Naive thymus-derived CD8-positive, alpha-beta T cell (primary cell): ENCODE measurements at regions of chr11 and their contacts with region 1.

Region 1: GRCh38 chr11:560305-561147 is at the starts of genes LMNTD2 and RASSF7:
- DNase-seq: peak; percentile 91 to 97 (median 95)
- ATAC-seq: peak; percentile 89 to 92
- H3K4me3 Mint-ChIP-seq: peak within 1 kb of the TSS; percentile 82 to 91 (median 86)
- H3K27ac Mint-ChIP-seq: peak within 1 kb of the TSS; percentile 63 to 94 (median 84)
- H3K4me1 Mint-ChIP-seq: peaks cover 7 to 22% (median 17%) of the 10 kb centered on the region in 4 donors
- H3K27me3 Mint-ChIP-seq: no peaks in the 10 kb centered on the region
- polyA plus RNA-seq, gene LMNTD2: 0.96 to 1.9 (median 0.99) TPM
- polyA plus RNA-seq, gene RASSF7: 22.5 to 32.3 (median 24.2) TPM

Region 2: DNA sequence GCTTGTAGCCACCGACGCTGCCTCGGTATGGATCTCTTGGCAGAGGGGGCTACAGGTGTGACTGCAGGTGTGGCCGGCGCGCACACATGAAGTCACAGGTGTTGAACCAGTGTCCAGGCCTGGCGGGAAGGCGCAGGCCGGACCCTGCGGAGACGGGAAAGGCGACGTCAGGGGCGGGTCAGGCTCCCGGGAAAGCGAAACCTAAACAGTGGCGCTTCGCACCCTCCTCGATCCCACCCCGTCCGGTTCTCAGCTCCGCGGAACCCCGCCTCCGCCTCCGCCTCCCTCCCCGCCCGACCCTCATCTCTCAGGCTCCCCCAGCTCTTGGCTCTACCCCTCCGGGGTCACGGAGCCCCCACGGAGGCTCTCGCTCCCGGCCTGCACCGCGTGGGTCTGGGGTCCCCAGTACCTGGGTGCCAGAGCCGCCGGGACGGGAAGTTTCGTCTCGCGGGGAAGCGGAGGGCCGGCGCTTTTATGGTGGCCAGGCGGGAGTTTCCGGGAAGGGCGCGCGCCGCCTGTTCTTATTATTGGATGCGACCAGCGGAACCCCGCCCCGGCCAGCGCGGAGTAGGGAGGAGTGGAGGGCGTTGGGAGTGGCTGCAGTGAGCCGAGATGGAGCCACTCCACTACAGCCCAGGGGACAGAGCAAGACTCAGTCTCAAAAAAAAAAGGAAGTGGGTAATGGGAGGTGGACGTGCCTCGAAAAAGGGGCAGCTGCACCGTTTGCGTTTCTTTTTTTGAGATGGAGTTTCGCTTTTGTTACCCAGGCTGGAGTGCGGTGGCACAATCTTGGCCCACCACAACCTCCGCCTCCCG is 55.2 kb after region 1 on chr11 and contains the start of gene IRF7:
- POLR2A ChIA-PET with region 1: interaction called, 10 read pairs
- DNase-seq: peak; percentile 67 to 92 (median 80)
- ATAC-seq: peak; percentile 77 to 82
- H3K4me3 Mint-ChIP-seq: peak within 1 kb of the TSS; percentile 86 to 96 (median 91)
- H3K27ac Mint-ChIP-seq: peak within 1 kb of the TSS; percentile 74 to 96 (median 94)
- H3K4me1 Mint-ChIP-seq: peaks cover 7 to 23% (median 19%) of the 10 kb centered on the region in 4 donors
- H3K27me3 Mint-ChIP-seq: no peaks in the 10 kb centered on the region
- polyA plus RNA-seq, gene IRF7: 19.8 to 38.6 (median 25.3) TPM

Region 3: GRCh38 chr11:662689-663274 is 102.3 kb after region 1 on chr11:
- POLR2A ChIA-PET with region 1: no interaction called
- DNase-seq: peak in 6 of 10 donors; percentile 25 to 43 (median 38)
- ATAC-seq: peak; percentile 67 to 80
- H3K4me3 Mint-ChIP-seq: no peak overlapping the region
- H3K27ac Mint-ChIP-seq: peak overlapping the region in 2 of 10 donors; percentile 49 to 88
- H3K4me1 Mint-ChIP-seq: peaks cover 0 to 5% (median 2%) of the 10 kb centered on the region in 4 donors
- H3K27me3 Mint-ChIP-seq: no peaks in the 10 kb centered on the region

Region 4: DNA sequence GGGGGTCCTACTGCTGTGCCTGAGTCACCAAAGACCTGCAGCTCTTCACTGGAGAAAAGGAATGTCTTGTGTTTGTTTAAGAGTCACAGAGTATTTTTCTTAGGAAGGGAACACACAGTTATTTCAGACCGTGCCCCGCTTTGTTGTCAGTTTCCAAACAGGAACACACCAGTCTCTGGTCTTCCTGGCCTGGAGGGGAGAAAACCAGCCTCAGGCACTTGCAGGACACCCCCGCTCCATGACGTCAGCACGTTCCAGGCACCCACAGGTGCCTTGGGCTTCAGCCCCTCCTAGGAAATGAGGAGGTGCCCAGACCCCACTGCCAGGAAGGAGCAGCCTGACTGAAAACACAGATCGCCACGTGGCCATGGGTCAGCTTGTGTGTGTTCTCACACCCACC is 129.1 kb after region 1 on chr11:
- POLR2A ChIA-PET with region 1: no interaction called
- DNase-seq: peak in 1 of 10 donors; percentile 37
- ATAC-seq: no peak
- H3K4me3 Mint-ChIP-seq: no peak overlapping the region
- H3K27ac Mint-ChIP-seq: peak overlapping the region in 5 of 10 donors; percentile 19 to 89 (median 71)
- H3K4me1 Mint-ChIP-seq: peaks cover 21 to 45% (median 35%) of the 10 kb centered on the region in 4 donors
- H3K27me3 Mint-ChIP-seq: no peaks in the 10 kb centered on the region

Region 5: GRCh38 chr11:727859-728748 is 167.6 kb after region 1 on chr11:
- POLR2A ChIA-PET with region 1: interaction called, 26 read pairs
- DNase-seq: peak; percentile 66 to 85 (median 79)
- ATAC-seq: peak; percentile 67 to 82
- H3K4me3 Mint-ChIP-seq: no peak overlapping the region
- H3K27ac Mint-ChIP-seq: no peak overlapping the region
- H3K4me1 Mint-ChIP-seq: peaks cover 4 to 15% (median 12%) of the 10 kb centered on the region in 4 donors
- H3K27me3 Mint-ChIP-seq: peaks cover 2 to 5% (median 4%) of the 10 kb centered on the region in 5 donors